Body of pancreas (tissue), 4 donors: ENCODE measurements at regions of chr12 and their contacts with region 1.

Region 1: DNA sequence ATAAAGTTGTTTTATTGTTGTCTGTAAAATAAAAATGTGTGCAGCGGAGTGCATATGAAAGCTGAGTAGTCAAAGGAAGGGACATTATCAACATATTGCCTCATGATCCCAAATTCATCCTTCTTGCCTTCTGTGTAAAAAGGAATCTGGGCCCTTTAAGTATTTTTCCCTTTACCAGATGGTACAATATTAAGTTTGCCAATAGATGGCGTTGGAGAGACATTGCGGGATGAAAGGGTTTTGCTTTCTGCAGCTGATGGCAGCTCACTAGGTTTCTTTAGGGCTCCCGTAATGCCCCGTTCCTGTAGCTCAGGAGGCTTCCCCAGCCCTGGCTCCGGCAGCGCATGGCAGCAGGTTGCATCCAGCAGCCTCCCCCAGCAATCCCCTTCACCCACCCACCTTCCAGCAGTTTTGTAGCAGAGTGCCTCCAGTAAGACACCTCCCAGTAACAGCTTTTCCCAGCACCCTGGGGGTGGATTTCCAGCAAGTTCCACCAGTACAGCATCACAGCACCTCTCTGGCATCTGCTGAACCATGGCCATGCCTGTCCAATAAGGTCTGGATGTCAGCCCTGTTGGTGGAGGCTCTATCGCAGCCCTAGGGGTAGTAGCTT is 354.4 kb downstream of the MED13L start:
- DNase-seq: no peak
- ATAC-seq: no peak
- H3K4me3 ChIP-seq: no peak overlapping the region
- H3K27ac ChIP-seq: no peak overlapping the region
- H3K4me1 ChIP-seq: no peaks in the 10 kb centered on the region
- H3K27me3 ChIP-seq: no peaks in the 10 kb centered on the region
- CTCF ChIP-seq: no peak
- POLR2A ChIP-seq: no peak

Region 2: DNA sequence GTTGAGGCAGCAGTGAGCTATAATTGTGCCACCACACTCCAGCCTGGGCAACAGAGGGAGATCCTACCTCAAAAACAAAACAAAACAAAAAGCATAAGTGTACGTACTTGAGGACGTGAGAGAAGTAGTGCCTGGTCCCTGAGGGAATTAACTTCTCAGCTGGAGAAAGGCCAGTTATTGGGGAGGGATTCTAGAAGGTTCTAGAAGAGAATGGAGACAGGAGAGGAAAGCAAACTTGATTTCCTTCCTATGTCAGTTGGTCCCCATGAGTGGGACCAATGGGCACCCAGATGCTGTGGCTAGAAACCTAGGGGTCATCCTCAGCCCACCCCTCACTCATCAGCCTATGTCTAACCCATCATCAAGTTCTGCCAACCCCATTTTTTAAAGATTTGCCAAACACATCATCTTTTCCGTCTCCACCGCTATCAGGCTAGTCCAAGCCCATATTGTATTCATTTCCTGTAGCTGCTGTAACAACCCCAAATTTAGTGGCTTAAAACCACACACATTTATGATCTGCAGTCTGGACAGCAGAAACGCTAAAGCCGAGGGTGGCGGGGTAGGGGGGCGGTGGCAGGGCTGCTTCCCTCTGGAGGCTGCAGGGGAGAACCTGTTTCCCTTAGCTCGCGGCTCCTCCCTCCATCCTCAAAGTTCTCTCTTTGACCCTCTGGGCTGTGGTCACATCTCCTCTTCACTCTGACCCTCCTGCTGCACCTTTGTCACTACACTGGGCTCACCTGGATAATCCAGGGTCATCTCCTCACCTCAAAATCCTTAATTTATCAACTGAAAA is 1949.8 kb before region 1 on chr12:
- intact Hi-C with region 1: loop called (anchors 10 kb)
- DNase-seq: no peak
- ATAC-seq: no peak
- H3K4me3 ChIP-seq: no peak overlapping the region
- H3K27ac ChIP-seq: no peak overlapping the region
- H3K4me1 ChIP-seq: no peaks in the 10 kb centered on the region
- H3K27me3 ChIP-seq: no peaks in the 10 kb centered on the region
- CTCF ChIP-seq: no peak
- POLR2A ChIP-seq: no peak

Region 3: GRCh38 chr12:115823635-115824034 is 99.4 kb before region 1 on chr12:
- intact Hi-C with region 1: no loop called
- DNase-seq: peak in 3 of 4 donors; percentile 6 to 16 (median 10)
- ATAC-seq: peak; percentile 52
- H3K4me3 ChIP-seq: no peak overlapping the region
- H3K27ac ChIP-seq: no peak overlapping the region
- H3K4me1 ChIP-seq: no peaks in the 10 kb centered on the region
- H3K27me3 ChIP-seq: no peaks in the 10 kb centered on the region
- CTCF ChIP-seq: no peak
- POLR2A ChIP-seq: no peak

Region 4: DNA sequence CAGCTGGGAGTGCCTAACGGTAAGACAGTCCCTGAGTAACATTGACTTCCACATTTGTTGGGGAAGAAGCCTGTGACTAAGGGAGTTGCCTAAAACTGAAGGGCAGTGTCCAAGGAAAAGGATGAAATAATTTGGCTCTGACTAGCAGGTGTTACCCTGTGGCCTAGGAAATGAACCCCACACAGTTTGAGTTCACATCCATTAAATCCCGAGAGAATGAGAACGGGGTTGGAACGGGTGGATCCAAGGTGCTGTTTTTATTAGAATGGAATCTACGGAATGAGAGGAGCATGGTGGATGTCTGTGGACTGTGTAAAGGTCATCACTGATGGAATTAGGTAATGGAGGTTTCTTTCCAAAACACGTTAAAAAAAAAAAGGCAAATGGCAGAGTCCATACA is 30.4 kb after region 1 on chr12:
- intact Hi-C with region 1: no loop called
- DNase-seq: no peak
- ATAC-seq: no peak
- H3K4me3 ChIP-seq: no peak overlapping the region
- H3K27ac ChIP-seq: no peak overlapping the region
- H3K4me1 ChIP-seq: no peaks in the 10 kb centered on the region
- H3K27me3 ChIP-seq: no peaks in the 10 kb centered on the region
- CTCF ChIP-seq: no peak
- POLR2A ChIP-seq: no peak